ENCODE measurements at regions of chr2 and their contacts with region 1.

Region 1: DNA sequence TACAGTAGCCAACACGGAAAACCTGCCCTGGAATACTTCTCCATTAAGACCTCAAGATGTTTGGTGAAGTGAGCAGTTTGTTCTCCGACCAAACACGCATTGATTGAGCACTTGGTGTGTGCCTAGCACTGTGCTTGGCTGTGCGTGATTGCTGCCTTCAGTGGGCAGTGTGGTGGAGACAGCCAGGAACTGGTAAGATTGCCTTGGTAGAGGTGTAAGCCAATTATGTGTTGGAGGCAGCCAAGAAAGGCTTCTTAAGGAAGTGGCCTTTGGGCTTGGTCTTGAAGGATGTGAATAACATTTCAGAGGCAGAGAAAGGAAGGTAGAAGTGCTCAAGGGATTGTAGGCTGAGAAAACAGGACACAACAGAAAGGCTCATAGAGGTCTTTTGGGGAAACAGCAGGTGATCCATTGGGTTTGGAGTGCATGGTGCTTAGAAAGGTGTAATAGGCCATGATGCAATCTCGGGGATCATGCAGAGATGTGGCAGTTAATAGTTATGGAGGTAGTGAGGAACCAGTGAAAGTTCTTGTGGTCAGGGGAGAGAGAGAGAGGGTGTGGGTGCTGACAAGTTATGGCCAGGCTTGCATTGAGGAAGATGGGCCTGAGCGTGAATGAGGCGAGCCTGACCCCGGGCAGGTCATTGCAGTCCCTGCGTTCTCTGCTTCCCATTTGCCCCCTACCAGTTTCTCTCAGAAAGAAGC is 6.3 kb downstream of the B3GNT2 start:
- DNase-seq: peak; percentile 35
- H3K4me3 Mint-ChIP-seq: peak overlapping the region; percentile 17
- H3K27ac Mint-ChIP-seq: peak overlapping the region; percentile 97
- H3K4me1 Mint-ChIP-seq: peaks cover 79% of the 10 kb centered on the region
- H3K27me3 Mint-ChIP-seq: no peaks in the 10 kb centered on the region

Region 2: DNA sequence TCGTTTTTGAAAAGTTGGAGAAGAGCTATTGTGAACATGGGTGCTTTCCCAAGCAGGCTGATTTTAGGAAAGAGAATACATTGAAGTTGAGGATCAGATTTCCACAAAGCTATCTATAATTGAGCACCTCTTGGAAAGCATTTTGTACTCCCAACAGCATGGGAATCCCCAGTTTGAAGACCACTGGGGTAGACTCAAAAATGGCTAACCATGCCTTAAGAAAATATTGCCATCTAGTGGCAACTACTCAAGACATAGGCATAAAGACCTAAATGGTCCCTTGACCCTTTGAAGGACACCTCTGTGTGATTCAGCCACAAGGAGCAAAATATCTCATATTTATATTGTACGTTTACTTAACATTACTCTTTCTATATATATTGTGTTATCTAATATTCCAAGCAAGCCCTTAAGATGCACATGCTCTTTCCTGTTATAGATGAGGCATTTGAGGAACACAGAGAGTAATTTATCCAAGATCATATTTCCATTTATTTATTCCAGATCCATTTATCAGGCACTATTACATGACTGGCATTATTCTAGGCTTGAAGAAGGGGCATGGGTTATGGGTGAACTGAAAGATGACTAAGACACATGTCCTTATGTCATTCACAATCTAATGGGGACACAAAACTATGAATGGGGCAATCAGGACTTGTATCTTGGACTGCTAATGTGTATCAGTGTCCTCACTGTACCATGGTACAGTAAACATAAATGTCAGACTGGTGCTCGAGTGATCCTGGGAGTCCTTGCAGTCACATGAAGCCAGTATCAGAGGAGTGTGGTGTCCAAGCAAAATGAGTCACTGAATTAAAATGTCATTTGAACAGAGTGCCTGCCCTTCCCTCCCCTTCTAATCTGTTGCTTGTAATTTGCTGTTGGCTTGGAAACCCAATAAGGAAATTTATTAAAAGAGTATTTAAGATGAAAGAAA is 543.1 kb before region 1 on chr2:
- CTCF ChIA-PET with region 1: no interaction called
- intact Hi-C with region 1: no loop called
- DNase-seq: no peak
- H3K4me3 Mint-ChIP-seq: no peak overlapping the region
- H3K27ac Mint-ChIP-seq: no peak overlapping the region
- H3K4me1 Mint-ChIP-seq: no peaks in the 10 kb centered on the region
- H3K27me3 Mint-ChIP-seq: no peaks in the 10 kb centered on the region

Region 3: DNA sequence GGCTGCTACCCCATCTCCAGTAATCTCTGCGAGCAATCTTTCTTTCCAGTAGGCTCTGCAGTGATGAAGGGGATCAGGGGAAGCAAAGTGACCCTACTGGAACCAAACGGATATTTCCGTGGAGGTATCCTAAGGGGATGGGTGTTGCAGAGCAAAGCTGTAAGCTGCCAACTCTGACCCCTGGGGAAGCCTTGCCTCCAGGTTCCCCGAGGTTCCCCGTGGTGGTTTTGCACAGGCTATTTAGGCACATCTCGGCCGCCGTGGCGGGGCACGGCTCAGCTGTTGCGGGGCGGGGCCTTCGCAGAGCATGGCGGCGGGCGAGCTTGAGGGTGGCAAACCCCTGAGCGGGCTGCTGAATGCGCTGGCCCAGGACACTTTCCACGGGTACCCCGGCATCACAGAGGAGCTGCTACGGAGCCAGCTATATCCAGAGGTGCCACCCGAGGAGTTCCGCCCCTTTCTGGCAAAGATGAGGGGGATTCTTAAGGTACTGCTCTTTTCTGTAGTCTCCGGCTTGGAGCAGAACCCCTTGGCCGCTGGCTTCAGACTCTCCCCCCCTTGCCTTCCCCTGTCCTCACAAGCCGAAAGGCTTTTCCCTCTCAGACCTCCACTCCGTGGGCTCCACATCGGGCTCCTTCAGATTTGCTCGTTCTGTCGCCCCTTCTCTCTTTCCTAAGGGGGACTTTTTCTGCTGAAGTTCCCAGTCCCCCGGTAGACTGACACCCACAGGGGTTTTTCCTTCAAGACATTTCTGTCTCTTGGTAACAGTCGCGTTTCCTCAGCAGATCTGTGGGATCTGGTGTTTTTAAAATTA is 296.6 kb before region 1 on chr2 and contains the start of gene COMMD1:
- CTCF ChIA-PET with region 1: no interaction called
- intact Hi-C with region 1: loop called (anchors 1 kb)
- DNase-seq: peak; percentile 92
- H3K4me3 Mint-ChIP-seq: peak within 1 kb of the TSS; percentile 96
- H3K27ac Mint-ChIP-seq: peak within 1 kb of the TSS; percentile 63
- H3K4me1 Mint-ChIP-seq: peaks cover 25% of the 10 kb centered on the region
- H3K27me3 Mint-ChIP-seq: no peaks in the 10 kb centered on the region
- total RNA-seq, gene COMMD1: 26.9 to 29.5 TPM

Region 4: DNA sequence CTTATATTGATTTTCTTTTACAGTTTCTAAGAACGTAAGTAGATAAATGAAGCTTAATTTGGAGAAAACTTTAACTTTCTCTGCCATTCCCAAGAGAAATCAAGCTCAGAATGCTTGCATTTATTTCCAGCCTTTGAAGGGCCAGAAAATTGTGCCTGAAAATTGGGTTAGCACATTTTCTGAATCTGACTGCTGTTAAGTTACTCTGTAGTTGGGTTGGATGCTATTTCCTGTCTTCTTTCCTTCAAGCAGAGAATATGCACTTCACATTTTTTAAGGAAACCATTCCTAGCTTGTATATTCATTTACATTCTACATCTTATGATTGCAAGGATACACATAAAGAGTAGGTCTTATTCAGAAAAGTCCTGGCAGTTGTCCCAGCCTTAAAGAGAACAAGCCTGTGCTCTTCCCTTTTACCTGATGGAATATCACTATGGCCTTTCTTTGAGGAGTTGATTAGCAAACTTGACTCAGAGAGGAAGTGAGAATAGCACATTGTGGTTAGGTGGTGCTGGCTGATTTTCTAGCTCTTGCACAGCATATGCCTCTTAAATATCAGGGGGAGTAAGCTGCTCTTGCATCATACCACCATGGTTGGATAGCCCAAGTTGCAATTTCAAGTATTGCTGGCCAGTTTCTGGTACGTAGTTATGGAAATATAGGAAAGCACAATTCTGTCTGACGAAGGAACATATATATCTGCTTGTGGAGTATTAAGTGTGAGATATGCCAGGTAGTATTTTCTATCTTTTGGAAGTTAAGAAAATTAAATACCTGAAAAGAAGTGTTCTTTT is 163.0 kb before region 1 on chr2:
- CTCF ChIA-PET with region 1: no interaction called
- intact Hi-C with region 1: loop called (anchors 1 kb)
- DNase-seq: peak; percentile 58
- H3K4me3 Mint-ChIP-seq: no peak overlapping the region
- H3K27ac Mint-ChIP-seq: no peak overlapping the region
- H3K4me1 Mint-ChIP-seq: peaks cover 17% of the 10 kb centered on the region
- H3K27me3 Mint-ChIP-seq: no peaks in the 10 kb centered on the region

Region 5: DNA sequence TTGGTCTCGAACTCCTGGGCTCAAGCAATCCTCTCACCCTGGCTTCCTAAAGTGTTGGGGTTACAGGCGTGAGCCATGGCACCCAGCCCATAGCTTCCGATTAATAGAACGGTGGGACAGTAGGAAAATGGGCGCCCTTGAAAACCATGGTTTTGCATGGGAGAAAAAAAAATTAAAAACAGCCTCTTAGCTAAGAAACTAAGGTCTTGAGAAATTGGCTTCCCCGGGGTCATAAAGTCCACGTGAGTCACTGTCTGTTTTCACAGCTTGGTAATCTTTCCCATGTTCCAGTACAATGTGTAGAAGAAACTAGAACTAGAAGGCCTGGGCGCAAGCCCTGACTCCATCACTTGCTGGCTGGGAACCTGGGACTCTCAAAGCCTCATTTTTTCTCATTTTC is 14.4 kb after region 1 on chr2:
- CTCF ChIA-PET with region 1: interaction called, 3 read pairs
- intact Hi-C with region 1: loop called (anchors 2 kb)
- DNase-seq: peak; percentile 30
- H3K4me3 Mint-ChIP-seq: no peak overlapping the region
- H3K27ac Mint-ChIP-seq: no peak overlapping the region
- H3K4me1 Mint-ChIP-seq: peaks cover 95% of the 10 kb centered on the region
- H3K27me3 Mint-ChIP-seq: no peaks in the 10 kb centered on the region

Region 6: DNA sequence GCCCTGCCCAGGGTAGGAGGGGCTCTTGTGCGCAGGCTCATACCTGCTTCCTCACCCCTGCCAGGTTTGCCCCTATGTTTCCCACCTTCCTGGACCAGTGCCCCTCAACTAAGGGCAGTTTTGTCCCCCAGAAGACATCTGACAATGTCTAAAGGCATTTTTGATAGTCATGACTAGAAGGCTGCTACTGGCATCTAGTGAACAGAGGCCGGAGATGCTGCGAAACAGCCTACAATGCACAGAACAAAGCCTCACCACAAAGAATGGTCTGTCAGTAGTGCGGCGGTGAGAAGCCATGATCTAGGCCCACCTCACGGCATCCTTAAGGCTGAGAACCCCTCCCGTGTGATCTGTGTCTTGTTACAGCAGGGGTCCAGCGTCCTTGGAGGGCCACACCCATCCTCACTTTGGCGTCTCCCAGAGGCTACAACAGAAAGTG is 207.9 kb after region 1 on chr2:
- CTCF ChIA-PET with region 1: interaction called, 6 read pairs
- intact Hi-C with region 1: loop called (anchors 2 kb)
- DNase-seq: no peak
- H3K4me3 Mint-ChIP-seq: no peak overlapping the region
- H3K27ac Mint-ChIP-seq: no peak overlapping the region
- H3K4me1 Mint-ChIP-seq: peaks cover 3% of the 10 kb centered on the region
- H3K27me3 Mint-ChIP-seq: no peaks in the 10 kb centered on the region

Measured in activated naive CD4-positive, alpha-beta T cell treated with anti-CD3 and anti-CD28 coated beads for 36 hours (primary cell).